Head of caudate nucleus (tissue), 42 donors: ENCODE measurements at regions of chr1 and their contacts with region 1.

Region 1: GRCh38 chr1:225977937-225978748 is 21.0 kb downstream of the SDE2 start:
- DNase-seq: peak in 2 of 42 donors; percentile 15 to 20

Region 2: DNA sequence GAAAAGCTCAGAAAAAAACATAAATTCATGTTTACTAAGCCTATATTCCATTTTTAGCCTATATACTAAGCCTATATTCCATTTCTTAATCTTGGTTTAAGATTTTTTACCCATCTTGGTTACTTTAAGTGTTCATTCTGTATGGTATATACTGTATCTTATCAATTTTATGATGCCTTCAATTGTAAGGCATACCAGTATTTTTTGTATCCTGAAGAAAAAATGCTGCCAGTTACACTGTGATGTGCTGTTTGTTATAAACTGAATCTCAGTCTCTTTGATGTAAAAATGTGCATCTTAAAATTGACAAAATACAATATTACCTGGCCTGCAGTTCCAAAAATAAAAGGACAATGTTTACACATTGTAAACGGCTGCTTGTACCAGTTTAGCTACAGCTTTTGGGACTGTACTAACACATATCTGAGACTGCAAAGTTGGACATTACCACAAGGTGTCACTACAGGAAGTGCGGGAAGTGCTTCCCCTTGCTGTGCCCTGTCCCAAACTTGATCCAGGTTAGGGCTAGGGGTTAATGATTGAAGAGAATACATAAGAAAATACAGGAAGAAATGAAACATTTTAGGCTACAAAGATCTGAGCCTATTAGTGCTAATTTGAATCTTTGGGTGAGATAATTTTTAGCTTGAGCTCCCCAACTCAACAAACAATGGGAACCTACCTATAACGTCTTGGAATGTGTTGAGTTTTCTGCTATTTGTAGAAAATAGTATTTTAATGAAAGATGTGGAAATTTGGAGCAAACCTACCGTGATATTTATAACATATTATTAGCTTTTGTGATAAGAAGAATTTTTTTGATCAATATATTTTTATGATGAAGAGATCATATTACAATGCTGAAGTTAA is 659.2 kb before region 1 on chr1:
- intact Hi-C with region 1: loop called (anchors 10 kb)
- DNase-seq: peak in 17 of 42 donors; percentile 11 to 66 (median 25)

Region 3: GRCh38 chr1:225474986-225475820 is 502.9 kb before region 1 on chr1:
- intact Hi-C with region 1: loop called (anchors 2 kb)
- DNase-seq: peak in 40 of 42 donors; percentile 30 to 86 (median 68)

Region 4: GRCh38 chr1:225777583-225778336 is 200.4 kb before region 1 on chr1 and contains the start of gene SRP9:
- intact Hi-C with region 1: loop called (anchors 5 kb)
- DNase-seq: peak; percentile 97 to 99 (median 99)

Region 5: DNA sequence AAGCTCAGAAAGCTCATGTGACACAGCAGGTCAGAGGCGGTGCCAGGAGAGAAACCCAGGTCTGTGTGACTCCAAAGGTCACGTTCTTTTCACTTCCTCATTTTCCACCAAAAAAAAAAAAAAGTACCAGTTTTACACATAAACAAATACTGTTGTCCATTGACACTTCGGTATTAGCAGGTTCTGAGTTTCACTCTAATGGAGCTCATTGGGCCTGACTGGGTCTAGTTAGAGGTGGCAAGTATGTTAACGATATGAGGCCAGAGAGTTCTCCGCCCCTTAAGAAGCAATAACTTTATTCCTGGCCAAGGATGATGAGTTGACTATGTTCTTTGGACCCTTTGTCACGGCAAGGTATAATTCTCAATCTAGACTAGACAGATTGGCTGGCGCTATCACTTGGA is 51.0 kb after region 1 on chr1:
- intact Hi-C with region 1: no loop called
- DNase-seq: peak in 1 of 42 donors; percentile 31